ENCODE measurements at regions of chr12 and their contacts with region 1.

Region 1: GRCh38 chr12:119176267-119176849 is 2.4 kb upstream of the HSPB8 start:
- DNase-seq: peak; percentile 89 to 97 (median 92)
- ATAC-seq: peak; percentile 59 to 71 (median 68)
- H3K4me3 ChIP-seq: peak overlapping the region; percentile 11 to 71 (median 49)
- H3K27ac ChIP-seq: peak overlapping the region; percentile 45 to 99 (median 92)
- H3K4me1 ChIP-seq: peaks cover 0 to 35% (median 13%) of the 10 kb centered on the region in 12 donors
- H3K27me3 ChIP-seq: no peaks in the 10 kb centered on the region
- CTCF ChIP-seq: no peak
- POLR2A ChIP-seq: peak in 1 of 2 donors; percentile 72

Region 2: GRCh38 chr12:119115296-119115905 is 61.0 kb before region 1 on chr12:
- intact Hi-C with region 1: loop called in 3 of 10 experiments (anchors 5 kb)
- DNase-seq: peak in 2 of 5 donors; percentile 35
- ATAC-seq: peak in 3 of 4 donors; percentile 31 to 57 (median 37)
- H3K4me3 ChIP-seq: no peak overlapping the region
- H3K27ac ChIP-seq: no peak overlapping the region
- H3K4me1 ChIP-seq: peaks cover 0 to 3% (median 0%) of the 10 kb centered on the region in 12 donors
- H3K27me3 ChIP-seq: peaks cover 0 to 4% (median 0%) of the 10 kb centered on the region in 9 donors
- CTCF ChIP-seq: peak; percentile 82 to 97 (median 93)
- POLR2A ChIP-seq: no peak

Region 3: GRCh38 chr12:119156401-119157044 is 19.8 kb before region 1 on chr12:
- intact Hi-C with region 1: loop called in 2 of 10 experiments (anchors 1 to 2 kb)
- DNase-seq: peak in 4 of 5 donors; percentile 55 to 74 (median 58)
- ATAC-seq: peak in 3 of 4 donors; percentile 17 to 55 (median 35)
- H3K4me3 ChIP-seq: peak overlapping the region in 2 of 12 donors; percentile 3 to 23
- H3K27ac ChIP-seq: peak overlapping the region in 11 of 12 donors; percentile 51 to 90 (median 80)
- H3K4me1 ChIP-seq: peaks cover 0 to 43% (median 4%) of the 10 kb centered on the region in 12 donors
- H3K27me3 ChIP-seq: peaks cover 0 to 4% (median 0%) of the 10 kb centered on the region in 9 donors
- CTCF ChIP-seq: peak in 8 of 12 donors; percentile 16 to 49 (median 30)
- POLR2A ChIP-seq: no peak

Region 4: GRCh38 chr12:119198421-119198820 is 22.1 kb after region 1 on chr12:
- intact Hi-C with region 1: no loop called
- DNase-seq: no peak
- ATAC-seq: peak in 1 of 4 donors; percentile 5
- H3K4me3 ChIP-seq: no peak overlapping the region
- H3K27ac ChIP-seq: peak overlapping the region in 6 of 12 donors; percentile 8 to 71 (median 28)
- H3K4me1 ChIP-seq: peaks cover 0 to 22% (median 6%) of the 10 kb centered on the region in 12 donors
- H3K27me3 ChIP-seq: no peaks in the 10 kb centered on the region
- CTCF ChIP-seq: no peak
- POLR2A ChIP-seq: no peak

Region 5: DNA sequence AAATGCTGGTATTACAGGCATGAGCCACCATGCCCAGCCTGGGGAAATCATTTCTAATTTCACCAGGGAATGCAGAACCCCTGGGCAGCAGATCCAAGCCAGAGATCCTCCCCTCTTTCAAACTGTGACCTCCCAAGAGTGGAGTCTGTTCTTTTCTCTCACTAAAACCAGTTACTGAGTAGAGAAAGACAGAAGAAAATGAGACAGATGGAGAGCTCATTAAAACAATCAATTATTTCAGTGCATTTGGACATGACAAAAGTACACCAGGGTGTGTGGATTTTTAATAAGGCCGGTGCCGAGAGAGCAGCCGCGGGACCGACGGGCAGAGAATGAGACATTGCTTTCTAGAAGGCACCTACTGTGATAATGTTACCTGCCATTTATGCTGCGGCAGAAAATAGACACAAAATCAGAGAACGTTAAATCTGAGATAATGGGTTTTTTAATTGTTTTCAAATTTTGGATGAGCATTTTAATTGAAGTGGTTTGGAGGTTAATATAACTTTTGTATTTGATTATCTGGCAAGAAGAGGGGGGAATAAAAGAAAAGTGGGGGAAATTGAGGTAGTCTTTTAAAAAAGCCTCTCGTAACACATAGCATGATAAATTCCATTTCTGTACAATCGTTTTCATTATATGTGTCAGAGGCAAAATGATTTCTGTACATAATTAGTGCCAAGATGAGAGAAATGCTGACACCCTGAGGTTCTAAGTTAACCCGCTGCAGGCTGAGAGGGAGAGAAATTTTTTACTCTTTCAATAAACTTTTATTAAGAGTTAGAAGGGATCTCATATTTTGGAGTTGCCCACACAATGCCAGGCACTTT is 73.2 kb after region 1 on chr12:
- intact Hi-C with region 1: loop called in 3 of 10 experiments (anchors 2 to 5 kb)
- DNase-seq: no peak
- ATAC-seq: no peak
- H3K4me3 ChIP-seq: no peak overlapping the region
- H3K27ac ChIP-seq: peak overlapping the region in 8 of 12 donors; percentile 16 to 62 (median 40)
- H3K4me1 ChIP-seq: peaks cover 0 to 31% (median 13%) of the 10 kb centered on the region in 12 donors
- H3K27me3 ChIP-seq: no peaks in the 10 kb centered on the region
- CTCF ChIP-seq: no peak
- POLR2A ChIP-seq: no peak

Region 6: DNA sequence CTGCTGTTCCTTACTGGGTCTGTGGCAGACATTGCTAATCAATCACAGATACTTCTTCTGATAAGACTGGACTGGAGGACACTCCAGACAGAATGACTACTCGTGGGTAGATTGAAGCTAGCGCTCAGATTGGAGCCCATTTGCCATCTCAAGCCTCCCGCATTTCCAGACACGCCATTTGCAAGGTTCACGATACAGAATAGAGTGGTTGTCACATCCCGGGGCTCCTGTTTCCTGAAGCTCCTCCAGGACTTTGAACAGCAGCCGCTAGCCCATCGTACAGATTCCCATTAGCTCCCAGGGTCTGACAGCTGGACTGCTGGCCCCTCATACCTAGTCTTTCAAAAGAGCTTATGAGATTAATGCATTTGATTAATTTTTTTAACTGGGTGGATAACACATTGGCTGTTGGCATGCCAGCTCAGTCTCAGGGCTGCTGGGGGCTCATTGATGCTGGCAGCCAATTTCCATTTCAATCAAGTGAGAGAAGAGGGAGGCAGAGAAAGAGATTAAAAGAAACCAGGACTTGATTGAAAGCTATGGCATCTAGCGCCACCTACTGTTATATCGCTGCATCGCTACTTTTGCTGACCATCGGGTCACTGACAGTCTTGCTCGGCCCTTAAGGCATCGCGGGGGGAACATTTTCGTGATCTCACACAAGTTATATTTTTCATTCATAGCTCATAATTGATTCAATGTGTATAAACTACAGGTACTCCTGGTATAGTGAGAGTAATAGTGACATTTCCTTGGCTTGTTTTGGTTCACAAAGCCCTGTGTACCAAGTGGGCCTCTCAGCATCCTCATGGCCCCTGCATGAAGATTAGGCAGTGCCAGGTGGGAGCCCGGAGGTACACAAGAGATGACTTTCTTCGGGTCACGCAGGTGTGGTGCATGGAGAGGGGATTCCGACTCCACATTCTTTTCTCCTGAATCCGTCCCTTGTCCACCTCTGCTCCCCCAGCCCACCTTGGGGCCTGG is 236.7 kb after region 1 on chr12:
- intact Hi-C with region 1: loop called in 1 of 10 experiments (anchors 5 kb)
- DNase-seq: peak in 4 of 5 donors; percentile 53 to 67 (median 58)
- ATAC-seq: peak in 3 of 4 donors; percentile 42 to 73 (median 58)
- H3K4me3 ChIP-seq: no peak overlapping the region
- H3K27ac ChIP-seq: no peak overlapping the region
- H3K4me1 ChIP-seq: peaks cover 0 to 6% (median 0%) of the 10 kb centered on the region in 12 donors
- H3K27me3 ChIP-seq: no peaks in the 10 kb centered on the region
- CTCF ChIP-seq: peak; percentile 82 to 93 (median 90)
- POLR2A ChIP-seq: no peak